ENCODE measurements at regions of chr1 and their contacts with region 1.

Region 1: GRCh38 chr1:112881742-112882127 is 74.3 kb downstream of the SLC16A1 start:
- DNase-seq: no peak
- ATAC-seq: no peak
- H3K4me3 Mint-ChIP-seq: no peak overlapping the region
- H3K27ac Mint-ChIP-seq: no peak overlapping the region
- H3K4me1 Mint-ChIP-seq: no peaks in the 10 kb centered on the region
- H3K27me3 Mint-ChIP-seq: no peaks in the 10 kb centered on the region
- CTCF ChIP-seq: no peak

Region 2: DNA sequence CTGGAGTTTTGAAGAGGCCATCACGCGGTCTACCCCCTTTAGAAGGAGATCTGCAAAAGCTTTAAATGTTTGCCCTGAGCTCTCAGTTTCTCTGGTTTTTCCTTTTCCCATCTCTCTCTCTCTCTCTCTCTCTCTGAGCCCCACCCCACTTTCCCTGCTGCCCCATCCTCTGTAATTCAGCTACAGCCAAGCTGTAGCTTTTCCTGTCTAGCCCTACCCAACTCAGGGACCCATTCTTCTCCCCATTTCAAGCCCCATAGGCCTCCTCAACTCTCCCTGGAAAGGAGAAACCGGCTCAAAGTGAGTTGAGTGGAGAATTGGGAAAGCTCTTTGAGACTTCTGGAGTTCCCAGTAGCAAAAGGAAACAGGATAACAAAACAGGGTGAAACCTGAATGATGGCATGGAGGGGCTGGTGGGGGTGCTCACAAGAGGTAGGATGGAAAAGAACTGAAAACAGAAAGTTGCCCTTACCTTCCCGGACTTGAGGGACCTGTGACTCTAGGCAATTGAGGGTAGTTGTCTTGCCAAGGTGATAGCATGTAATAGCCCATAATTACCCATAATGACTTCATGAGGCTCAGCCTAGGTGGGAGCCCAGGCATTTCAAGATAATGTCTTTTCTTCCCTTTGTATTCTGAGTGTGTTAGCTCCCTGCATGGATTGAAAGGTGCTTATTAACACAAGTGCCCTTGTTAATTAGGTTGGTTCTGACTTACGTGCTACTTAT is 10.7 kb before region 1 on chr1:
- CTCF ChIA-PET with region 1: interaction called, 10 read pairs
- POLR2A ChIA-PET with region 1: no interaction called
- intact Hi-C with region 1: no loop called
- DNase-seq: no peak
- ATAC-seq: no peak
- H3K4me3 Mint-ChIP-seq: no peak overlapping the region
- H3K27ac Mint-ChIP-seq: no peak overlapping the region
- H3K4me1 Mint-ChIP-seq: peaks cover 3% of the 10 kb centered on the region
- H3K27me3 Mint-ChIP-seq: peaks cover 5% of the 10 kb centered on the region
- CTCF ChIP-seq: no peak

Region 3: DNA sequence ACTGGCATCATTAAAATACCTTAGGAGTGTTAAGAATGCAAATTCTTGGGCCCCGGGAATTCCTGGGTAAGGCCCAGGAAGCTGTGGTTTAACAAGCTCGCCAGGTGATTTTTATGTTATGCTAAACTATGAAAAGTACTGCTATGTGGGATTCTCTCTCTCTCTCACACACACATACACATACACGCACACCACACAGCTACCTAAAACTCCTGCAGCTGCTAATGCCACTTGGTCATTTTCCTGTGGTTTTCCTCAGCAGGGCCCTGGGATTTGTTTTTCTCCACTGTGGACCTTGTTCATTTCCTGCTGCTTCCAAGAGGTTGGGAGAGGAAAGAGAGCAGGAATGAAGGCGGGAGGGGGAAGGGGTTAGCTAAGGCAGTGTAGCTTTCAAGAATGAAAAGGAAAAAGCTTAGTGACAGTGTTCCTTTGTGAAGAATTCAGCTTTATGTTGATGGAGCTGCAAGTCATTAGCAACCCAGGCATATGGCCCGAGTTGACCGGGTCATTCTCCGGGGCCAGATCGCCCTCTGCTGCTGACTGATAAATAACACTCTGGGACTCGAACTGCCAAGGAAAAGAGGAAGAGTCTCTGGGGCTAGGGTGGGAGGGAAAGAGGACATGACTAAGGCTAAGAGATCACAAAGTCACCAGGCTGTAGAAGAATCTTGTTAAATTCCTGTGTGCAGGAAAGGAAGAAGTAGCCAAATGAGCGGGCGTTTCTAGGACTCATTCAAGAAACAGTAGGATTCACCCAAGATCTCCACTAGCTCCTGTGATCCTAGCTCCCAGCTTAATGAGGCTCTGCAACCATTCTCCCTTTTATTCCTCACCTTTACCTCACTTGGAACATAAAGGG is 160.8 kb after region 1 on chr1:
- CTCF ChIA-PET with region 1: interaction called, 11 read pairs
- POLR2A ChIA-PET with region 1: no interaction called
- intact Hi-C with region 1: no loop called
- DNase-seq: peak; percentile 50
- ATAC-seq: peak; percentile 54
- H3K4me3 Mint-ChIP-seq: no peak overlapping the region
- H3K27ac Mint-ChIP-seq: no peak overlapping the region
- H3K4me1 Mint-ChIP-seq: peaks cover 37% of the 10 kb centered on the region
- H3K27me3 Mint-ChIP-seq: peaks cover 2% of the 10 kb centered on the region
- CTCF ChIP-seq: peak; percentile 42

Region 4: DNA sequence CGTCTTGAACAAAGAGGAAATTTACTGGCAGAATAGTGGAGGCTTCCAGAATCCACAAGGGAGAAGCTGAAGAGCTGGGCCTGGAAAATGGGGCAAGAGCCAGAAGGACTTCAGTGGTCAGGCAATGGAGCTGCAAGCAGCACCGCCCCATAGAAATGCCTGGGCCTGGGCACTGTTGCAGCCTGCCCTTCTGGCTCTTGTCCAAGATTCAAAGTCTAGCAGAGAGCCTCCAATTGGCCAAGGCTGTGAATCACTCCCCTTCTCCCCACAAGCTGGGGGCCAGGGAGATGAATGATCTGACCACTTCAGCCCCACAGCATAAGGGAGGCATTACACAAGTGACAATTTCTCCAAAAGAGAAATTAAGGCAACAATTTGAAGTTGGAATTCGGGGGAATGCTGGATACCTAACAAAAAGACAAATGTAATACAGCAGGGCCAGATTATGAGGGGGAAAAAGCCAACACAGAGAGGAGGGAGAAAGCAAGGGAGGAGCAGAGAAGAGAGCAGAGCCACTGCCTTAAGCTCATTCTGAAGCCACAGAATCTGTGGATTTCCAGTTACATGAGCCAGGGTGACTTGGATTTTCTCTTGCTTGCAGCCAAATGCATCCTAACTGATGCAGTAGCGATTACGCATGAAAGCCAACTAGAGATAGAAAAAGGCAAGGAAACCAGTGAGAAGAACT is 271.5 kb after region 1 on chr1:
- CTCF ChIA-PET with region 1: no interaction called
- POLR2A ChIA-PET with region 1: no interaction called
- intact Hi-C with region 1: no loop called
- DNase-seq: no peak
- ATAC-seq: no peak
- H3K4me3 Mint-ChIP-seq: no peak overlapping the region
- H3K27ac Mint-ChIP-seq: no peak overlapping the region
- H3K4me1 Mint-ChIP-seq: no peaks in the 10 kb centered on the region
- H3K27me3 Mint-ChIP-seq: no peaks in the 10 kb centered on the region
- CTCF ChIP-seq: no peak

Measured in activated CD8-positive, alpha-beta T cell treated with anti-CD3 and anti-CD28 coated beads for 36 hours (primary cell).